Vagina (tissue), 2 donors: ENCODE measurements at regions of chr6 and their contacts with region 1.

Region 1: DNA sequence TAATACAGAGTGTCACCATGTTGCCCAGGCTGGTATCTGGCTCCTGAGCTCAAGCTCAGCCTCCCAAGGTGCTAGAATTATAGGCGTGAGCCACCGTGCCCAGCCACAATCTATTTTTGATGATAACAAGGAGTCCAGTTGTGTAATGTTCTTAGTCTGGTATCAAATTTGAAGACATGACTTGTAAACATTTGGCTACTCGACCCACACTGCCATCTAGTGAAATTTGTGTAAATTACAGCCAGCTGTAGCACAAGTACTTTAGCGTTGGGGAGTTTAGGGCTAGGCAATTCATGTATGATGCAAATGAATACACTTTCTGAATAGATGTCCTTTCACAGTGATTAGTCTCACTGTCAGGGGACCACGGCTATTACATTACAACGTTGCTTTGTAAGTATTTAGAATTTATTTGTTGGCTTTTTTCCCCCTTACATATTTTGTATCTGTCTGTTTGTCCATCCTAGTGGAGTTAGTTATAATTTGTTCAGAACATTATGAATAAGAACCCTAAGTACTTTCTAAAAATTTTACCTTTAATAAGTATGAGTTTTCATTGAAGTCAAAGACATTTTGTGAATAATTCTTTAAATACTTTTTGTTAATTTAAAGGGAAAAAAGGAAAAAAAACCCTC is 139.7 kb downstream of the PRDM13 start:
- DNase-seq: no peak
- H3K4me3 ChIP-seq: no peak overlapping the region
- H3K27ac ChIP-seq: no peak overlapping the region
- H3K4me1 ChIP-seq: no peaks in the 10 kb centered on the region
- H3K27me3 ChIP-seq: no peaks in the 10 kb centered on the region
- CTCF ChIP-seq: peak; percentile 52 to 81 (median 61)
- POLR2A ChIP-seq: no peak

Region 2: GRCh38 chr6:99471638-99472037 is 274.7 kb before region 1 on chr6:
- intact Hi-C with region 1: loop called (anchors 10 kb)
- DNase-seq: no peak
- H3K4me3 ChIP-seq: no peak overlapping the region
- H3K27ac ChIP-seq: no peak overlapping the region
- H3K4me1 ChIP-seq: no peaks in the 10 kb centered on the region
- H3K27me3 ChIP-seq: no peaks in the 10 kb centered on the region
- CTCF ChIP-seq: no peak
- POLR2A ChIP-seq: no peak

Region 3: GRCh38 chr6:99588618-99589289 is 157.6 kb before region 1 on chr6:
- intact Hi-C with region 1: loop called (anchors 10 kb)
- DNase-seq: no peak
- H3K4me3 ChIP-seq: peak overlapping the region; percentile 45 to 55
- H3K27ac ChIP-seq: no peak overlapping the region
- H3K4me1 ChIP-seq: peaks cover 20% of the 10 kb centered on the region
- H3K27me3 ChIP-seq: no peaks in the 10 kb centered on the region
- CTCF ChIP-seq: no peak
- POLR2A ChIP-seq: no peak

Region 4: DNA sequence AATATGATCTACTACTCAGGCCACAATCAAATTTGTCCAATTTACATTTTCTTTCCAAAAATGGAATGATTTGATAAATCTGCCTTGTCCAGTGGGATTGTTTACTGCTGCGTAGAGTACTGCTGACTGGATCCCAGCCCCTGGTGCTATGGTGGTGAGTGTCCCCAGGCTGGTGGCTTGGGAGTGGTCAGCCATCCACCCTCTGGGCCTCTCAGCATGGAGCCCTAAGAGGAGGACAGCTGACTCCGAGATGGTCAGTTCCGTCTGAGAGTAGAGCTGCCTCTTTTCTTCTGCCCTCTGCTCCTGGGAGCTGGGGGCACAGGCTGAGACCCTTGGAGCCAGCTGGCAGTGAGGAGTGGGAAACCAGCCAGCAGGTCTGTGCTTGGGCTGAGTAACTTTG is 117.1 kb before region 1 on chr6:
- intact Hi-C with region 1: no loop called
- DNase-seq: no peak
- H3K4me3 ChIP-seq: no peak overlapping the region
- H3K27ac ChIP-seq: no peak overlapping the region
- H3K4me1 ChIP-seq: no peaks in the 10 kb centered on the region
- H3K27me3 ChIP-seq: no peaks in the 10 kb centered on the region
- CTCF ChIP-seq: no peak
- POLR2A ChIP-seq: no peak